Psoas muscle (tissue), 8 donors: ENCODE measurements at regions of chr17 and their contacts with region 1.

Region 1: DNA sequence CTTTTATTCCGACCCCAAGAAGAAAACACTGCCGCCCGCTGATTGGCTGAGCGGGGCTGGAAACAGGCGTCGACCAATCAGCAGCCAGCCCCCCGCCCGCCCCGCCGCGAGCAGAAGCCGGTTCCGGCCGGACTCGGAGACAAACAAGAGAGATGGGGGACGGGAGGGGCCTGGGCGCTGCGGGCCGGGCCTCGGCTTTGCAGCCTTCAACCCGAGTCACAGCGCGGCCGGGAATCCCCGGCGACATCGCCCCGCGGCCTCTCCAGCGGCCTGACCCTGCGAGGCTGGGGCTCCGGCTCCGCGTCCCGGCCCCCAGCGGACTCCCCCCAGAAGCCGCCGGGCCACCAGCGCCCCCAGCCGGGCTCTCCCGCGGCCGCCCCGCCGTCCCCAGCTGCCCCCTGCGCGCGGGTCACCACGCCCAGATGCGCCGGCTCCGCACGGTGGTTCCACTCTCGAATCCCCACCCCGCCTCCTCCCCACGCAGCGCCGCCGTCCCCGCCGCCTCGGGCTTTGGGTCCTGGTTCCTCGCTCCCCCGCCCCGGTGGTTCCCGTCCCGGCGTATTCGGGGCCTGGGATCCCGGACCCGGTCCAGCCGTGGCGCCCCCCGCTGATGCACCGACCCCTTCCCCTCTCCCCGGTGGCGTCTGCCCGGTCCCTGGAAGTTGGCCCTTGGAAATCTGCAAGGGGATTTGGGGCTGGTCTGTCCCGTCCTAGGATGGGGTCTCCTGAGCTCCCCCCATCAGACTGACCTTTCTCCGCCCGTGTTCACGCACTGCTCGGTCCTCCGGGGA is 417 bp upstream of the SLC43A2 start:
- DNase-seq: peak; percentile 94 to 97
- ATAC-seq: peak; percentile 80 to 85 (median 83)
- H3K4me3 ChIP-seq: peak overlapping the region; percentile 93
- H3K27ac ChIP-seq: peak overlapping the region; percentile 92
- H3K4me1 ChIP-seq: peaks cover 29% of the 10 kb centered on the region
- H3K27me3 ChIP-seq: no peaks in the 10 kb centered on the region
- CTCF ChIP-seq: peak; percentile 54

Region 2: DNA sequence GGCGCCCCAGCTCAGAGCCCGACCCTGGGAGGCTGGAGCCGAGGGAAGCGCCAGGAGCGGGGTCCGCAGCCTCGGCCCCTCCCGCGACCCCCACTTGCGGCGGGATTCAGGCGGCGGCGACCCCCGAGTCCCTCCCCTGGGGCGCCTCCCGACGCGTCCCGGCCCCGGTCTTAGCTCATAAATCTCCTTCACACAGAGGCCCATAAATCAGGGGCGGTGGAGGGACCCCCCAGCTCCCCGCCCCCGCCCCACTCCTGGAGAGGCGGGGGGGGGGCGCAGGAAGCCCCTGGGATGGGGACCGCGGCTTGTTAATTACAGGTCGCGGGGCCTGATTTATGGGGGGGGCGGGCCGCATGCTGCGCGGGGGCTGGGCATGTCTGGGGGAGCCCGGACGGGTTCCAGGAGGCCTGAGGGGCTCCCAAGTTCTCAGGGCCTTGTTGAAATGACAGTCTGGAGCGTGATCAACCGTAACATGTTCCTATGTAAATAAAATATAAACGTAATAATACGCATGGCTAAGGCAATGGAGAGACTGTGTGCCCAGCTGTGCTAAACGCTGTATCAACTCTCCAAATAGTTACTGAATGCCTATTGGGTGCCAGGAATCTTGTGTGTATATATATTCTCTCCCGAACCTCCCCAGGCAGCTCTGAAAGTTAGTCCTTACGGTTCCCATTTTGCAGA is 368.8 kb before region 1 on chr17:
- intact Hi-C with region 1: loop called in 1 of 2 experiments (anchors 5 kb)
- DNase-seq: no peak
- ATAC-seq: peak in 2 of 4 donors; percentile 10 to 15
- H3K4me3 ChIP-seq: peak overlapping the region; percentile 58
- H3K27ac ChIP-seq: no peak overlapping the region
- H3K4me1 ChIP-seq: peaks cover 8% of the 10 kb centered on the region
- H3K27me3 ChIP-seq: peaks cover 0 to 30% (median 0%) of the 10 kb centered on the region in 3 donors
- CTCF ChIP-seq: no peak

Region 3: DNA sequence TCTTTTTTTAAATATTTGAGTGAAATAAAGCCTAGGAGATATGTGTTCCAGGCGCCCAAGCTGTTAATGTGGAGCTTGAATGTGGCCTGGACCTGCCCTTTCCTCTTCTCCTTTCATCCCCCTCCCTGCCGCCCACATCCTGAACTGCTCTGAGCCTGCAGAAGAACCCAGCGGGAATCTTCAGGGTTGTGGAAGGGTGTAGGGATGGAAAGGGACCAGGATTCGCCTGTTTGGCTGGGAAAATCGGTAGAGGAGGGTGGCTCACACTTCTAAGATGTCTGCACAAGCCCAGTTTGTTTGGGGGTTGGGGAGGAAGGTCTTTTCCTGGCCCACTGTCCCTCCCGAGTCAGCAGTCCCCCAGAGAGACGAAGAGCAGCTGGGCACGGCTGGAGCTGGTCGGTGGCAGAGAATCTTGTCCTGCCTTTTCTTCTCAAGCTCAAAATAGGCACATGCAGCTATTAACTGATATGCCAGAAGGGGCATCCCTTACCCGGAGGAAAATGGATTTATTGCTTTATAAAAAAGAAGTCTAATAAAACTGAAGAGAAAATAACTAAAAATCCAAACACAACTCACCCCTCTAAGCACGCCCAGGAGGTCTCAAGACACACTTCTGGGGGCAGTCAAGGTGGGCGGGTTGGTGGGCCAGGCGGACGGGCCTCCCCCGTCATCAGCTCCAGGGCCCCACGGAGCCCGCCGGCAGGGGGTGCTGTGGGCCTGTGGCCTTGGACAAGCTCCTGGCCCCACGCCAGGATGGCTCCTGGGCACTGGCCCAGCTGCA is 54.9 kb before region 1 on chr17:
- intact Hi-C with region 1: loop called (anchors 1 kb)
- DNase-seq: peak; percentile 90 to 93
- ATAC-seq: peak; percentile 55 to 77 (median 62)
- H3K4me3 ChIP-seq: no peak overlapping the region
- H3K27ac ChIP-seq: peak overlapping the region; percentile 74
- H3K4me1 ChIP-seq: peaks cover 41% of the 10 kb centered on the region
- H3K27me3 ChIP-seq: no peaks in the 10 kb centered on the region
- CTCF ChIP-seq: peak; percentile 98

Region 4: DNA sequence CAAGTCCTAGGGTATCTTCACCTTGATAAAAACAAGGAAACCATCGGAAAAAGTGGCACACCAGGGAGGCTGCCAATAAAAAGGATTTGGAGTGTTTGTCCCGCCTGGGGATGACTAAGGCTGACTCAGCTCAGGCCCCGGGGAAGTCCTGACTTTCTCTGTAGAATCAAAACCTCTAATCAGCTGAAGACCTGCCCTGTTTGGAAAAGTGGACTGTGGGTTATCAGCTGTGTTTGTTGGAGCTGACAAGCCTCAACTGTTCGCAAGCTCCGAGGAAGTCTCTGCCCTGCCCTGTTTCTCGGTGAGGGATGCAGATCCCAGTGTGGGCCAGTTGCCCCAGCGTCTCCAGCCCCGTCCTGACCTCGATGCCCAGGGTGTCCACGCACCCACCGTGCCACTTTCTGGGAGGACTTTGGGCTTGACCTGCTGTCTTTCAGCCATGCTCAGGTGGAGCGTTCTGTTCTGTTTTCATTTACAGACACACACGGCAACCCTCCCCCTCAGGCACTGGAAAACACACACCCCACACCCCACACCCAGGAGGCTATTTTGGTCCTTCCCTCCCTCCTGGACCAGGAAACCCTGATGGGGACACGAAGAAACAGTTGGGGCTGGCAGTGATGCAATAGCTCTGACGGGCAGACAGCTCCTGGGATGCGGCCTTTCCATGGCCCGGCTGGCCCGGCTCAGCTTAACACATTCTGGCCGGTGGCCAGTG is 38.9 kb before region 1 on chr17:
- intact Hi-C with region 1: loop called (anchors 5 kb)
- DNase-seq: peak; percentile 85 to 95
- ATAC-seq: peak; percentile 77 to 87 (median 83)
- H3K4me3 ChIP-seq: peak overlapping the region; percentile 37
- H3K27ac ChIP-seq: peak overlapping the region; percentile 90
- H3K4me1 ChIP-seq: peaks cover 65% of the 10 kb centered on the region
- H3K27me3 ChIP-seq: no peaks in the 10 kb centered on the region
- CTCF ChIP-seq: no peak

Region 5: DNA sequence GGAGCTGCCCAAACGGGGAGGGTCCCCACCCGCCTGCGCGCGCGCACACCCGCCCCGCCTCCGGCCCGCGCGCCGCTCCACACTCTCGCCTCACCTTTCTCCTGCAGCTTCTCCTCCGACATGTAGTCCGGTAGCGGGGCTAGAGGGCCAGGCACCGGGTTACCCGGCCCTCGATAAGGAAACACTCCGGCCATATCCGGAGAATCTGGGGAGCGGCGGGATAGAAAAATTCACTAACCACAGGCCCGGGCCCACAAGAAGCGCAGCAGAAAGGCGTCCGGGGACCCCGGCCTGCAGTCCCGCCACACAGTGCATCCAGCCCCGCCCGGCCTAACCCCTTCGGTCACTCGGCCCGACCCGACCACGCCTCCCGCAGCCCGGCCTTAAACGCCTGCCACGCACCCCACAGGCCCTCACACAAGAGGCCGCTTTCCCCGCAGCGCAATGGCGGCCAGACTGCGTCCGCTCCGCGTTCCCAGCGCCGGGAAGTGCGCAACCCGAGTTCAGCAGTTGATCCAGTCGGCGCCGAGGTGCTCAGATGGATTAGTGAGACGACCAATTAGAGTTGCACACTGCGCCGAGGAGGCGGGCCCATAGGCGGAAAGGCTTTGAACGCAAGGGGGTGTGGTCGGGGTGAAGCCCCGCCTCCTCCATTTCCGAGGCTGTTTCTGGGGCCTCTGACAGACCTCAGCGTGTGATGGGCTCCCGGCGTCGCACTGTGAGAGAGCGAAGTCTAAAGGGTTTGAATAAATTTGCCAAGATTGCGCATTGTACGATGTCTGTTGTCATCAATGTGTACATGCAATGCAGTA is 55.5 kb after region 1 on chr17 and contains the start of gene PRPF8:
- intact Hi-C with region 1: no loop called
- DNase-seq: peak; percentile 97 to 99
- ATAC-seq: peak; percentile 98 to 99 (median 98)
- H3K4me3 ChIP-seq: peak within 1 kb of the TSS; percentile 78
- H3K27ac ChIP-seq: peak within 1 kb of the TSS; percentile 88
- H3K4me1 ChIP-seq: peaks cover 23% of the 10 kb centered on the region
- H3K27me3 ChIP-seq: no peaks in the 10 kb centered on the region
- CTCF ChIP-seq: no peak
- total RNA-seq, gene PRPF8: 218 to 305 (median 223) TPM